Right ventricle myocardium superior (tissue), 1 donor: ENCODE measurements at regions of chr20 and their contacts with region 1.

Region 1: DNA sequence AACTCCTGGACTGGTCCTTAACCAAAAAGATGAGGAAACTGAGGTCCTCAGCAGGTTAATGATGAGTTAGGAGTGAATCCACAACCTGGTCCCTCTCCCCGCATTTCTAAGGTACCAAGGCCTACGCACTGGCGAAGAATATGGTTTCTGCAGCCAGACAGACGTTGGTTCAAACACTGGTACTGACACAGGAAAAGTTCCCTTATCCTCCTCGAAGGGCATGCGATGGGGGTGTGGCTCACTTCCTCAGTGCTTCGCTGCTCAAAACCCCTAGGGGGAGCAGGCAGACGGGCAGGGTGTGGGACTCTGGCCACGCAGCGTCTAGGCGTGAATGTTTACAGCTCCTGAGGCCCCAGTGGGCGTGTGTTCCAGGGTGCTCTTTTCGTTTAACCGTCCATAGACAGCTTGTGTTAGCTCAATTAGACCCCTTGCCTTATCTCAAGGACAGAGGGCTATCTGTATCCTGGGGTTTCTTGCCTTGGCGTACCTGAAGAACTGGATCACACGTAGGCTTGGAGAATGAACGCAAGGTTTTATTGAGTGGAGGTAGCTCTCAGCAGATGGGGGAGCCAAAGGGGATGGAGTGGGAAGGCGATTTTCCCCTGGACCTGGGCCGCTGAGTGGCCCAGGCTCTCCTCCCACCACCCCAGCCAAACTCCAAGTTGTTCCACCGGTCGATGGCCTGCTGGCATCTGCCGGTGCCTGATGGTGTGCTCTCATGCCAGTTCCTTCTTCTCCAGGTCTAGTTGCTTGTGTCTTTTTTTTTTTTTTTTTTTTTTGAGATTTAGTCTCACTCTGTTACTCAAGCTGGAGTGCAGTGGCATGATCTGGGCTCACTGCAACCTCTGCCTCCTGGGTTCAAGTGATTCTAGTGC is 31.8 kb upstream of the PTPN1 start:
- DNase-seq: peak; percentile 77
- ATAC-seq: peak; percentile 71

Region 2: GRCh38 chr20:49484180-49485140 is 993.9 kb before region 1 on chr20:
- intact Hi-C with region 1: no loop called
- DNase-seq: peak; percentile 90
- ATAC-seq: peak; percentile 96

Region 3: GRCh38 chr20:50575847-50576720 is 97.7 kb after region 1 on chr20:
- intact Hi-C with region 1: loop called (anchors 5 kb)
- DNase-seq: peak; percentile 82
- ATAC-seq: peak; percentile 64

Region 4: DNA sequence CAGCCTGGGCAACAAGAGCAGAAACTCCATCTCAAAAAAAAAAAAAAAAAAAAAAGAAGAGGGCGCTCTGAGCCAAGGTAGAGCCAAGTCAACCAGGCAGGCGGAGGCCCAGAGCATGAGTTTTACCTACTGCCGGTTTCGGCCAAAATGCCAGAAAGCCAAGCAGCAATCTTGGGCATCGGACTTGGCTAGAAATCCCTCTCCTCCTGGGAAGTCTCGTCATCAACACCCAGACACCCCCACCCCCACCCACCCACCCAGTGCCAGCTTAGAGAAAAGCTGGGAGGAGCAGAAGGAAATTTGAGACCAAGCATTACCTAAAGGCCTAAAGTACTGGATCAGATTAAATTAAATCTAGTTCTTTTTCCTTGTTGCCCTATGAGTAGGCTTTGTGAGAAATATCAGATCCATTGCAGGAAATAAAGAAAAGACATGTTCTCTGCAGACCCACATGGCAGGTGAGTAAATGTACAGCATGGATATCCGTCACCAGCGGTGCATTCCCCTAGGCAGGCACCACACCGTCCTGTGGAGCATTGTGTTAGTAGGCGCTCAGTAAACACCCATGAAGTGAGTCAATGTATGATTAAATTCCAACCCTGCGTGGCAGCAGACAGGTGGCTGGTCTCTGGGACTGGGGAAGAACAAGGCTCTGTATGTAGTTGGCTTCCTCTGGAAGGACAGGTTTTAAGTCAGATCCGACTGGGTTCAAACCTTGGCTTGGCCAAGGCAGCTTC is 191.9 kb after region 1 on chr20:
- intact Hi-C with region 1: no loop called
- DNase-seq: no peak
- ATAC-seq: no peak

Region 5: DNA sequence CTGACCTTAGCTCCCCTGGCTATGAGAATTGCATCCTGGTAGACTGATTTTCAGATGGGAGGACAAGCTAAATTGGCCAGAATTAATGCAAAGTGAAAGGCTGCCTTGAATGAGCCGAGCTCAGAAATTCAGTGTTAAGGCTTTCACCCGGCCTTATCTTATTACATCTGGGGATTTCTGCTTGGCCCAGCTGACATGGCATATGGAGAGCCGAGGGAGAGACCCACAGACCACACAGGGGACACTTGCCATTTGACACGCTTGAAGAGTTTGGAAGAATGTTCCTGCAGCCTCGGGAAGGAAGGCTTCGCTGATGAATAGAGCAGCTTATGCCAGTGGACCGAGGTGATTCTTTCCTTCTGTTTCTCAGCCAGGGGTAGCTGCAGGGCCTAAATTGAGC is 489.2 kb after region 1 on chr20:
- intact Hi-C with region 1: no loop called
- DNase-seq: no peak
- ATAC-seq: no peak